ENCODE measurements at regions of chr16 and their contacts with region 1.

Region 1: DNA sequence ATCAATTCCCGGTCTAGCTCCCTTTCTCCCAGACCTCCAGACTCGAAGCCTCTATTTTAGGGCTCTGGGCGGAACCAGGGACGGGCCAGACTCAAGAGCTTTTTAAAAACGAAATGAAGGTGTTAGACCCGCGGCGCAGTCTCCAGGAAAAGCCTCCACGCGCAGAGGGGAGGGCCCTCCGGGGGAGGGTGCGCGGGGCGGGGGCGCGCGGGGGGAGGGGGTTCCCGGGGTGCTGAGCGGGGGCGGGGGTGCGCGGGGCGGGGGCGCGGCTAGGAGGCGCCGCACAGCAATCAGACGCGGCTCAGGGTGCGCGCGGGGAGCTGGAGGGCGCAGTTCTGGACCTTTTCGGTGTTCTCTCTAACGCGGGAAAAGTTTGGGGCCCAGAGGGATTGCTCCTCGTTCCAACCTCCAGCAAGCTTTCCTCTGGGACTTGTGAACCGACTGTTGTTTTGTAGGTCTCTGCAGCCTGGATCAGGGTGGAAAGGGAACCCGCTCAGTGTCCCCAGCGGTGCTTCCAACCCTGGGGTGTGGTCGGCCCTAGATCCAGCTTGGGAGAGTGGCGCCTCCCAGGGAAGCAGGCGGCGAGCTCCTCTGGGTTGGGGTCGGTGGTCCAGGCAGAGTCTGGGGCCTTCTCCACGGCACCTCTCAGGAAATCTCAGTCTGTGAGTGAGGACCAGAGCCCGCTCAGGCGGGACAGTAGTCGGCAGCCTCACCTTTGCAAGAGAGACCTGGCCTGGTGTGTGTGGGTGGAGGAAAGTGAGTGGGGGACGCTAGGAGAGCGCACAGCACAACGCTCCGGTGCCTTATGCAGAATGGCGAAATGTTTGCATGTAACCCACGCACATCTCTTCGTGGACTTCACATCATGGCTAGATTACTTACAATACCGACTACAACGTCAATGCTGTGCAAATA is 2.0 kb downstream of the AHSP start:
- DNase-seq: no peak

Region 2: DNA sequence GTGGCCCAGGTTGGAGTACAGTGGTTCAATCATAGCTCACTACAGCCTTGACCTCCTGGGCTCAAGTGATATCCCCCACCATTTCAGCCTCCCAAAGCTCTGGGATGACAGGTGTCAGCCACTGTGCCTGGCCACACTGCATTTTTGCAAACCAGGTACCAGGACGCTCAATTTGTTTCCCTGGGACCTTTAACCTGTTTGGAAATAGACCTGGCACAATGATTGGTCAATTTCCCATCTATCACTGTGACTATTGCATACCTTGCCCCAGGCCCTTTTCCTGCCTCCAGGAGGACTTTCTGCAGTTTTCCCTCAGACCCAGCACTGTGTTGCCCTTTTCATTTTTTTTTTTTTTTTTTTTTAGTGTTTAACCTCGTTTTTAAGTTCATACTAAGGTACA is 360.8 kb before region 1 on chr16:
- in situ Hi-C with region 1: no loop called
- DNase-seq: no peak

Region 3: GRCh38 chr16:31459722-31460581 is 69.7 kb before region 1 on chr16:
- in situ Hi-C with region 1: loop called (anchors 10 kb)
- DNase-seq: peak; percentile 100